ENCODE measurements at regions of chr22 and their contacts with region 1.

Region 1: DNA sequence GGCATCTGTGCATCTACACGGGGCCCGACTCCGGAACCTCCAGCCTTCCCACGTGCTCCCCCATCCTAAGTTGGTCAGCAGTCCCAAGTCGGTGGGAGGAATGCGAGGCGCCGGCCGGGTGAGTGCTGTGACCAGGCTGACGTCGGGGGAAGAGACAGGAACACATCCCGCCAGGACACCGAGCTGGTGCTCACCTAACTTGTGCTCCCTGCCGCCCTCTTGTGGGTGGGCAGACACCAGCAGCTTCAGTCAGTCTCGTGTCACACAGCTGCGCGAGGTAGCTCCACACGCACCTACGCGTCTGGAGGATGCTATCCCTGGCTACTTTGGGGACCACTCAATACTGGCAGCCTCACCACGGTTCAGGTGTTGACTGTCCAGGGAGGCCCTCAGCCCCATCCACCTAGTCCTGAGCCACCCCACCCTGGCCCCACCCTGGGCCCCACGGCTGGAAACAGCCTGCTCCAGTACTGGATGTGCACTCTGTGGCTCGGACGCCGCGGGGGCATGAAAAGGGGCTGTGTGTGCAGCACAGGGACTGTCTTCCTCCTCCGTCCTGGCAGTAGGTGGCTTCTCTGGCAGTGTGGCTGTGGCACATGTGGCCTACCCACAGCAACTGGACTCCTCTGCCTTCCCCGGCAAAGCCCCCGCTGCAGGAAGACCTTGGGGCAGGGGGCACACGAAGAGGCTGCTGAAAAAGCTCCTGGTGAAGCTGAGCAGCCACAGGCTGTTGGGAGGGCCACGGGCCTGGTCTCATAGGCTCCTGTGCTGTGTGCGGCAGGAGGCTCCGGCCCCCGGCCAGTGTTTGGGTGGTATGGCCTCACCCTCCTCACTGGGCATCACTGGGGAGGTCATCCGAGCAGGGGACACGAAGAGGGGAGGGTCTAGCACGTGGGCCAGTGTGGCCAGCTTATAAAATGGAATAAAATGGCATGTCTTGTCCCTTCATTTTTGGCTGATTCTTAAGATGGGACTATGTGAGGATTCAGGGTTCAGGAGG is 11.2 kb upstream of the BID start:
- DNase-seq: peak; percentile 52
- H3K4me3 Mint-ChIP-seq: no peak overlapping the region
- H3K27ac Mint-ChIP-seq: no peak overlapping the region
- H3K4me1 Mint-ChIP-seq: peaks cover 21% of the 10 kb centered on the region
- H3K27me3 Mint-ChIP-seq: peaks cover 2% of the 10 kb centered on the region

Region 2: DNA sequence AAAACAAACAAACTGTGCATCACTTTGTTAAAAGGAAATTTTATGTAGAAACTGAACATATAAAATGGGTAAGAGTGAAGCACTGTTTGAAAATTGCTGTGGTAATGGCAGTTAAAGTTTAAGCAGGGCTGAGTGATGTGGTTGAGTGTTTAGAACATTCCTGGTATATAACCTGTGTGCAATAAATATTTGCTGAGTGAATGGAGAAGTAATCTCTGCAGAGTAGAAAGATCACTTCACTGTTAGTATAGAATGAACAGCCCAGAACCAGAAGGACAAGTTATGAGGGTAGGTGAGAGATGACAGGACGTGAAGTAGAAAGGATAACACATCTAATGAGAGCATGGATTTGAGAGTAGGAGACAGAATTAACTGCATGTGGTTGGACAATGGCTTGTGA is 388.9 kb before region 1 on chr22:
- intact Hi-C with region 1: no loop called
- DNase-seq: no peak
- H3K4me3 Mint-ChIP-seq: no peak overlapping the region
- H3K27ac Mint-ChIP-seq: no peak overlapping the region
- H3K4me1 Mint-ChIP-seq: no peaks in the 10 kb centered on the region
- H3K27me3 Mint-ChIP-seq: peaks cover 9% of the 10 kb centered on the region

Region 3: DNA sequence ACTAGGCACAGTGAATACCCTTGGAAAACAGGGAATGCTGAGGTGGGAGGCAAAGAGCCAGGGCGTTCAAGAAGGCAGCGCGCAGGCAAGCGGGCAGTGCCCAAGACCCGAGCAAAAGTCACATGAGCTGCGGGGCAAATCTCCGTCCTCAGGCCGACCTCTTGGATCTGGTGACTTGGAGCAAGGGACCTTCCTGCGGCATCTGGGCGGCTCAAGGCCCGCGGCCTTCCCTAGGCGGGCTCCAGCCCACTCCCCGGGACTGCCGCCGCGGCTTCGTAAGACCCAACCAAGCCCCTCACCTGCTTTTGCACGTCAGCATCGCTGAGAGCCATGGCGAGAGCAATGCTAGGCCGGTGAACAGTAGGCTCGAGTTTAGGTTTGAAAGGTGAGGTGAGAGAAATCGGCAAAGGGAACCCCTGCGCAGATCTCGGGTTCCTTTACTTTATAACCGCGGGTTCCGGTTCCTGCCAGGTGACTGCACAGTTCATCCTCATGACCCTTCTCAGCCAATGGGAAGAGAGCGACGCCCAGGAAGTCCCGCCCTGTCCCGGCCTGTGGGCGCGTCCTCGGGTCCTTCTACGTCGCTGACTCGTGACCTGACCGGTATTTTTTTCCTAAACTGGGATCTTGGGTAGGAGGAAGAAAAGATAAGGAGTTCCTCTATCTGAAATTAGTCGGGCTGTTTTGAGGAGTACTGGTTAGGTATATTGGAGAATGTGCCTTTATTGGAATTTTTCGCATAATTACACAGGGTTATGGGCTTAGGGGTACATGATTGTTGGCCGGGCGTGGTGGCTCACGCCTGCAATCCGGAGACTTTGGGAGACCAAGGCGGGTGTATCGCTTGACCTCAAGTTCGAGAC is 156.9 kb before region 1 on chr22 and contains the start of gene ATP6V1E1:
- intact Hi-C with region 1: no loop called
- DNase-seq: peak; percentile 95
- H3K4me3 Mint-ChIP-seq: peak within 1 kb of the TSS; percentile 94
- H3K27ac Mint-ChIP-seq: peak within 1 kb of the TSS; percentile 85
- H3K4me1 Mint-ChIP-seq: peaks cover 21% of the 10 kb centered on the region
- H3K27me3 Mint-ChIP-seq: peaks cover 5% of the 10 kb centered on the region
- total RNA-seq, gene ATP6V1E1: 120 and 128 TPM in 2 replicates

Region 4: GRCh38 chr22:17734187-17734586 is 51.3 kb before region 1 on chr22:
- intact Hi-C with region 1: loop called (anchors 2 kb)
- DNase-seq: peak; percentile 16
- H3K4me3 Mint-ChIP-seq: no peak overlapping the region
- H3K27ac Mint-ChIP-seq: peak overlapping the region; percentile 67
- H3K4me1 Mint-ChIP-seq: peaks cover 17% of the 10 kb centered on the region
- H3K27me3 Mint-ChIP-seq: no peaks in the 10 kb centered on the region

Region 5: DNA sequence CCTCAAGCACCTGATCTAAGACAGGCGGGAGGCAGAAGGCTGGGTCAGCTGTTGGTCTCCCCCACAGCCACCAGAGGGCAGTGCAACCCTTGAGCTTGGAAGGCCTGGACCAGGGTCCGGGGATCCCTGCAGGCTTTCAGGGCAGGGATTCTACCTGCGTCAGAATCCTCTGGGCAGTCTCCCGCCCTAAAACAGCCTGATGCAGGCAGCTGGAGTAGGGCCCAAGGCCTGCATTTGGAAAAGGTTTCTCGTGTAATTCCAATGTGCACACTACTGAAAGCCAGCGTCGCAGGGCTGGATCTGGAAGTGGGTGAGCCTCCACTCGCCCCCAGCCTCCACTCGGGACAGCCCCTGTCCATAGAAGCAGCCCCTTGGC is 43.0 kb before region 1 on chr22:
- intact Hi-C with region 1: loop called (anchors 1 kb)
- DNase-seq: peak; percentile 38
- H3K4me3 Mint-ChIP-seq: no peak overlapping the region
- H3K27ac Mint-ChIP-seq: no peak overlapping the region
- H3K4me1 Mint-ChIP-seq: no peaks in the 10 kb centered on the region
- H3K27me3 Mint-ChIP-seq: no peaks in the 10 kb centered on the region

Region 6: DNA sequence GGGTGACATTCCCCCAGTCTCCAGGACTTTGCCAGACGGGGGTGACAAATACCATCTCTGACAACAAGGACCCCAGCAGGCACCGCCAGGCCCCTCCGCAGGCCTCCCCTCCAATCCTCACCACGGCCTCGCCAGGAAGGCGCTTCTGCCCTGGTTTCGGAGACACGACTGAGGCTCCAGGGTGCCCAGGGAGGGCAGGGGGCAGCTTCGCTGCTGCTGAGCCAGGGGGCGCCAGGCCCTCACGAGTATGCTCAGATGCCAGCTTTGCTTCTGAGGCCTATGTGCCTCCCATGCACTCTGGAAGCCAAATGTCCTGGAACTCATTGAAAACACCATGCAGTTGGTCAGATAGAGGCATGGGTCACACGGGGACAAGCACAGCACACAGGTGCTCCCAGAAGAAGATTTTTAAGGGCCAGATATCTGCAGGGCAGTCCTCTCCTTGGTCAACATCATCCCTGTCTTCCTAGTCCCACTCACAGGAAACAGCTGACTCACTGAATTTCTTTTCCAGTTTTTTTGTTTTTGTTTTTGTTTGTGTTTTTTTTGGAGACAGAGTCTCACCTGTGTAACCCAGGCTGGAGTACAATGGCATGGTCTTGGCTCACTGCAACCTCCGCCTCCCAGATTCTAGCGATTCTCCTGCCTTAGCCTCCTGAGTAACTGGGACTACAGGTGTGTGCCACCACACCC is 31.1 kb before region 1 on chr22:
- intact Hi-C with region 1: loop called (anchors 1 kb)
- DNase-seq: no peak
- H3K4me3 Mint-ChIP-seq: no peak overlapping the region
- H3K27ac Mint-ChIP-seq: no peak overlapping the region
- H3K4me1 Mint-ChIP-seq: no peaks in the 10 kb centered on the region
- H3K27me3 Mint-ChIP-seq: peaks cover 2% of the 10 kb centered on the region

Region 7: DNA sequence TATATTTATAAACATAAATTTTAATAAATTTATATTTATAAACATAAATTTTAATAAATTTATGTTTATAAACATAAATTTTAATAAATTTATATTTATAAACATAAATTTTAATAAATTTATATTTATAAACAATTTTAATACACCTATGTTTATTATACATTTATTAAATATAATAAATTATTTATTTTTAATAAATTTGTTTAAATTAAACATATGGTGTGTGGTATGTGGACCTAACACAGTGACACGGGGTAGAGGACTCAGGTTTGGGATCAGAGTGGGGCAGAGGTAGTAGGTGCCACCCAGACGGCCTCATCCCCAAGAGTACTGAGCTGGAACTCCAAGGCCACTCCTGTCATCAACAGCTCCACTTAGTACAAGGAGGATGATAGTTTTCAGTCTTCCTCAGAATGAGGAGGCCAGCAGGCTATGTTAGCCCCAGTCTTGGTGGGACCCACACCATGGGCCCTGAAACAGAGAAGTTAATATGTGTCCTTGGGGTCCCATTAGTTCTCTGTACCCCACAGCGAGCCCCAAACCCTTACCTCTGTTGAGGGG is 35.5 kb after region 1 on chr22:
- intact Hi-C with region 1: no loop called
- DNase-seq: no peak
- H3K4me3 Mint-ChIP-seq: no peak overlapping the region
- H3K27ac Mint-ChIP-seq: no peak overlapping the region
- H3K4me1 Mint-ChIP-seq: no peaks in the 10 kb centered on the region
- H3K27me3 Mint-ChIP-seq: no peaks in the 10 kb centered on the region

Region 8: DNA sequence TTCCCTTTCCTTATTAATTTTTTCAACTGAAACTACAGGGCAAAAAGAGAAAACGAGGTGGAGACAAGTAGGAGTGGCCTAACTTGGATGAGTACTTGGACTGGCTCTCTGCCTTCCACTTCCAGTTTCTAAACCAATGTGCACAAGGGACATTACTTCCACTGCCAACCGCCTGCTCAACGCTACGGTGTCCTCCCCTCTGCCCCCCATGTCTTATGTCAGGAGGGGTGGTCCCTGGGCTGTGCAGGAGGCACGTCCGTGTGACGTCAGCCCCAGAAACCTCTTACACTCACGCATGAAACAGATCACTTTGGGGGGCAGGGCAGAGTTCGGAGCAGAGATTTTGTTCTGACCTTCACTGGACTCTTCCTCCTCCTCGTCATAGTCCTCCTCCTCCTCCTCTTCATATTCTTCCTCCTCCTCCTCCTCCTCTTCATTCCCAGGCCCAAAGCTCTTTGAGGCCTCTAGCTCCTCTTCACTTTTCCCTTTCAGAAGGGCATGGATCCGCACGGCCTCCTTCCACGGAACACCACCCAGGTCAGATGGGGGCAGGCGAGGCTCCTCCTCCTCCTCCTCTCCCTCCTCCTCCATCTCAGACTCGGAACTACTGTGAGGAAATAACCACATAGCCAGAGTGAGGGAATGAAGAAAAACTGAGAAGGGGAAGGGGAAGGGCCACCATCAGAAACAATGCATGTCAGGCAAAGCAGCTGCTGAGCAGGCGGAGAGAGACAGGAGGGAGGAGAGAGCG is 46.2 kb after region 1 on chr22:
- intact Hi-C with region 1: no loop called
- DNase-seq: no peak
- H3K4me3 Mint-ChIP-seq: no peak overlapping the region
- H3K27ac Mint-ChIP-seq: no peak overlapping the region
- H3K4me1 Mint-ChIP-seq: peaks cover 5% of the 10 kb centered on the region
- H3K27me3 Mint-ChIP-seq: no peaks in the 10 kb centered on the region